ENCODE measurements at regions of chr12 and their contacts with region 1.

Region 1: DNA sequence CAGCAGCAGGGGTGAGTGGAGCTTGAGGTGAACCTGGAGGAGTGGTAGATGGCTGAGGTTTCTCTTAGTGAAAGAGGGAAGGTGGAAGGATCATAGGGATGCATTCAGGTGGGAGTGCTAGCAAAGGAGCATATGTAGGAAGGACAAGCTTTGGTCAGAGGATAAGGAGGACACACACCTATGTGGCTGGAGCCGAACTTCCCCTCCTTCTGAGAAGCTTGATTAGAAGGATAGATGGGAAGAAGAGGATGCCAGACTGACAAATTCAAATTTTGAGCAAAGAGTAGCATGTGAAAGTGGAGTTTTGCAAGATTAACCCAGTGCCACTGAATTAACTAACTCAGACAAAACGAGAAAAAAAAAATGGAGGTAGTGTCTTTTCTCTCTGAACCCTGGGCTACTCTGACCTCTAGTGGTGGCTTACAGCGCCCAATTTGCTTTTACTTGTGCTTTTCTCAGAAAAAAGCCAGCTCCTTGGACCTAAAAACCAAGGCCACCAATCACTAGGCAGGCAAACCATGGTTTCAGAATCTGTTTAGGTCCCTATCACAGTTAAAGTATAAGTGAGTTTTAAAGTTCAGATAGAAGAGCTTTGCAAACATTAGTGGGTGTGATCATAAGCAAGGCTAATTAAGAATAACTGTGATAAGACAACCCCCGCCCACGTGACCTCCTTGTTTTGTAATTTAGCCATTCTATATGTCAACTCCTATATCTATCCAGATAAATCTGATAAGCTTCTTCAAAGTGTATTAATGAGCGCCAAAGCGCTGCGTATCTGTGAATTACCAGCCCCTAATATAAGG is 15.5 kb downstream of the EMP1 start:
- DNase-seq: peak in 1 of 2 donors; percentile 65
- ATAC-seq: peak in 2 of 8 donors; percentile 24 to 52
- H3K4me3 ChIP-seq: no peak overlapping the region
- H3K27ac ChIP-seq: peak overlapping the region in 1 of 10 donors; percentile 34
- H3K4me1 ChIP-seq: peaks cover 11 to 51% (median 47%) of the 10 kb centered on the region in 9 donors
- H3K27me3 ChIP-seq: no peaks in the 10 kb centered on the region
- CTCF ChIP-seq: peak; percentile 57 to 83 (median 79)

Region 2: GRCh38 chr12:12803186-12803585 is 408.9 kb before region 1 on chr12:
- intact Hi-C with region 1: loop called in 1 of 10 experiments (anchors 10 kb)
- DNase-seq: peak in 1 of 2 donors; percentile 64
- ATAC-seq: peak; percentile 56 to 86 (median 70)
- H3K4me3 ChIP-seq: no peak overlapping the region
- H3K27ac ChIP-seq: peak overlapping the region in 6 of 10 donors; percentile 1 to 63 (median 28)
- H3K4me1 ChIP-seq: peaks cover 0 to 36% (median 24%) of the 10 kb centered on the region in 9 donors
- H3K27me3 ChIP-seq: no peaks in the 10 kb centered on the region
- CTCF ChIP-seq: no peak

Region 3: DNA sequence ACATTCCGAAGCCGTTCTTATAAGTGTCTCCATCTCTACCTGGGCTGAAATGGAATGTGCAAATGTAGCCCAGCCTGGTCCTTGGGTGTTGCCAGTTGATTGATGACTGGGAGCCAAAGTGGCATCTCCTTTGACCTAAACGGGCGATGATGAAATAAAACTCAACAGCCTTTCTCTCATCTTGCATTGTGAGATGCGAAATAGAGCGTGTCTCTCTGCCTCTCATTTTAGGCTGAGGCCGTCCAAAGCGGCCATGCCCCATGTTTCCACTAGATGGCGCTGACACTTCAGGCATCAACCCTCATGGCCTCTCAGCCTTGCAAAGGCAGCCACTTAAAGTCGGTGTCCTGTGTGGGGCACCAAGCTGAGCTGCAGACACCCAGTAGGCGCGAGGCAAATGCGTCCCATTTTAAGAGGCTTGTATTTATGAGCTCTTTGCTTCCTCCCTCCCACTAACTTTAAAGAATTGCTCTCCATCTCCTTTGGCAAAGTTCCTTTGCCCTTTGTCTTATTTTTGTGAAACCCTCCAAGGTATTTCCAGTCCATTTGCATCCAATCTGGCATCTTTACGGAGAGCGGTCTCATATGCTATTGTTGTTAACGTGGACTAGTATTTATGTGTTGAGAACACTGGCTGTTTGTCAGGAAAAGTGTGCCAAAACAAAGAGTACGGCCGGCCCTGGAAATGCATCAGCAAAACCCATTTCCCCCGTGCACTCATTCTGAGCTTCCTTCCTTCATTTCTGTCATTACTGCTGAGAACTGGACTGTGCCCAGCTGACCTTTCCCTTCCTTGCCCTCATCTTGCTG is 295.7 kb before region 1 on chr12:
- intact Hi-C with region 1: loop called in 9 of 10 experiments (anchors 1 to 10 kb)
- DNase-seq: peak; percentile 85 to 87
- ATAC-seq: peak; percentile 87 to 97 (median 95)
- H3K4me3 ChIP-seq: peak overlapping the region in 5 of 10 donors; percentile 16 to 32 (median 19)
- H3K27ac ChIP-seq: peak overlapping the region in 8 of 10 donors; percentile 12 to 51 (median 35)
- H3K4me1 ChIP-seq: peaks cover 0 to 19% (median 8%) of the 10 kb centered on the region in 9 donors
- H3K27me3 ChIP-seq: peaks cover 0 to 3% (median 0%) of the 10 kb centered on the region in 7 donors
- CTCF ChIP-seq: peak; percentile 94 to 99 (median 98)

Region 4: DNA sequence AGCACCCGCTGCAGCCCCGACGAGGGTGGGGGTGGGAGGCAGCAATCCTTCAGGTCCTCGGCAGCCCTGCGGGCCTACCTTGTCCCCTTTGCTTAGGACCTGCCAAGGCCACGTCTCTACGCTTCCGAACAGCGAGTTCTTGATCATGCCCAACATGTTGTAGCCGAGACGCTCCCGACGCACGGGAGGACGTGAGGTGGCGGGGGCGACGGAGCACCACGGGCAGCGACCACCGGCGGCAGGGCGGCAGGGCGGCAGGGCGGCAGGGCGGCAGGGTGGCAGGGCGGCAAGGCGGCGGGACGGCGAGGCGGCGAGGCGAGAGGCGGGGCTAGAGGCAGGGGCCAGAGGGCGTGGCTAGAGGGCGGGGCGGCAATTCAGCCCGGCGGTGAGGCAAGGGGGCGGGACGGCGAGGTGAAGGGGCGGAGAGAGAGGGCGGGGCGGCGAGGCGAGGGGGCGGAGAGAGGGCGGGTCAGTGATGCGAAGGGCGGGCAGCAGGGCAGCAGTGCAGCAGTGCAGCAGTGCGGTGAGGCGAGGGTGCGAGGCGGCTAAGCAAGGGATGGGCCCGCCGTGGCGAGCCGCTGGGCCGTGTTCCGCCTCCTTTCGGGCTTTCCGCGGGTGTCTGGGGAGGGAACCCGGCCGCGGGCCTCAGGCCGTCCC is 212.0 kb before region 1 on chr12 and contains the start of gene HEBP1:
- intact Hi-C with region 1: loop called in 6 of 10 experiments (anchors 5 to 10 kb)
- DNase-seq: peak; percentile 96 to 98
- ATAC-seq: peak; percentile 96 to 99 (median 98)
- H3K4me3 ChIP-seq: peak within 1 kb of the TSS; percentile 58 to 98 (median 86)
- H3K27ac ChIP-seq: peak within 1 kb of the TSS; percentile 78 to 99 (median 92)
- H3K4me1 ChIP-seq: peaks cover 5 to 64% (median 43%) of the 10 kb centered on the region in 9 donors
- H3K27me3 ChIP-seq: no peaks in the 10 kb centered on the region
- CTCF ChIP-seq: no peak
- total RNA-seq, gene HEBP1: 45.2 to 71.4 (median 51.4) TPM

Region 5: DNA sequence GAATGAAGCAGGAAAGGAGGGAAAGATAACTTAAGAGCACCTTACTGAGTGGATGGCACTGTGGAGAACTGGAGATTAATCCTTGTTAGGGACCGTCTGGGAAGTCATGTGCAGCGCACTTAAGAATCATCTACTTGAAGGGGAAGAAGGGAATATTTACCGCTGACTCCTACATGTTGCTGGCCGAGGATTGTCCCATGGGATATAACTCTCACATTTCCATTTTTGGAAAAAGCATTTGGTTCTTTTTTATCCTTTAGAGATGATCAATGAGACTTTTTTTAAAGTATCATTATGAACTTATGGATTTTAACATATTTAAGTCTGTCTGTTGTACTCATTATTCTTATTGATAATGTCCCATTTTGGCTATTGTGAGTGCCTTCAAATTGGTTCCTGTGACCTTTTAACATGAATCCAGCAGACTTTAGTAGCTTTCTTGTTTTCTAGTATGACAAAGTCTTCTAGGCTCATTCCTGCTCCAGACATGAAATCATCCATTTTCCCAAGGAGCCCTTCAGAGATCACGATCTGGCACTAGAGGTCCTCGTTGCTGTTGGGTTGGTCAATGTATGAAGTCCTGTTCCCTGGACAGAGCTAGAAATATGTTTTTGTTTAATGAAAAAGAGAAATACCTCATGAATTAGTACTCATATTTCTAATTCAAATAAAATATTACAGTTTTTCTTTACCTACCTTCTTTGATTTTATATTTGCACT is 188.1 kb before region 1 on chr12:
- intact Hi-C with region 1: loop called in 4 of 10 experiments (anchors 5 to 10 kb)
- DNase-seq: peak in 1 of 2 donors; percentile 15
- ATAC-seq: peak in 4 of 8 donors; percentile 67 to 84 (median 72)
- H3K4me3 ChIP-seq: no peak overlapping the region
- H3K27ac ChIP-seq: no peak overlapping the region
- H3K4me1 ChIP-seq: peaks cover 0 to 13% (median 0%) of the 10 kb centered on the region in 9 donors
- H3K27me3 ChIP-seq: peaks cover 0 to 3% (median 0%) of the 10 kb centered on the region in 7 donors
- CTCF ChIP-seq: peak in 6 of 9 donors; percentile 18 to 67 (median 44)

Region 6: GRCh38 chr12:13028825-13029570 is 183.1 kb before region 1 on chr12:
- intact Hi-C with region 1: loop called in 4 of 10 experiments (anchors 5 to 10 kb)
- DNase-seq: no peak
- ATAC-seq: no peak
- H3K4me3 ChIP-seq: no peak overlapping the region
- H3K27ac ChIP-seq: no peak overlapping the region
- H3K4me1 ChIP-seq: peaks cover 0 to 14% (median 0%) of the 10 kb centered on the region in 9 donors
- H3K27me3 ChIP-seq: peaks cover 0 to 3% (median 0%) of the 10 kb centered on the region in 7 donors
- CTCF ChIP-seq: no peak

Region 7: GRCh38 chr12:13187399-13187798 is 24.7 kb before region 1 on chr12:
- intact Hi-C with region 1: no loop called
- DNase-seq: no peak
- ATAC-seq: no peak
- H3K4me3 ChIP-seq: no peak overlapping the region
- H3K27ac ChIP-seq: no peak overlapping the region
- H3K4me1 ChIP-seq: peaks cover 0 to 11% (median 0%) of the 10 kb centered on the region in 9 donors
- H3K27me3 ChIP-seq: peaks cover 0 to 5% (median 0%) of the 10 kb centered on the region in 7 donors
- CTCF ChIP-seq: no peak

Measured in heart right ventricle (tissue), 16 donors.